Psoas muscle (tissue), 8 donors: ENCODE measurements at regions of chr1 and their contacts with region 1.

Region 1: GRCh38 chr1:62131093-62131725 is 63.4 kb upstream of the L1TD1 start:
- DNase-seq: no peak
- ATAC-seq: peak; percentile 74 to 88 (median 85)
- H3K4me3 ChIP-seq: no peak overlapping the region
- H3K27ac ChIP-seq: no peak overlapping the region
- H3K4me1 ChIP-seq: no peaks in the 10 kb centered on the region
- H3K27me3 ChIP-seq: no peaks in the 10 kb centered on the region
- CTCF ChIP-seq: peak; percentile 71

Region 2: DNA sequence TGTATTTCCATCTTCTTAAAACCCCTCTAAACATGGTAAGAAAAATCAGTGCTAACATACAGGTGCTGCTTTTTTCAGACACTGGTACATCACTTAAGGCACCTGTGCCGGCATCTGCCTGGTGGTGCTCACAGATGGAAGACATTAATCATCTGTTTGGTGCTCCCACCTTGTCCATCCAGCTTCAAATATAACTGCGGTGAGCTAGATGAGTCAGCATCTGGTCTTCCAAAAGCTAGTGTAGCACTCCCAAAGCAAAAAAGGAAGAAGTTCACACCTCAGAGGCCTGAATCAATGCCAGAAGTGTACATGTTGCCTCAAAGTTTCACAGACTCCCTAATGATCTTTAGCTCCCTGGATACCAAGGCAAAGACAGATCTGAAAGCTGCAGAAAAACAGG is 450.7 kb before region 1 on chr1:
- intact Hi-C with region 1: no loop called
- DNase-seq: no peak
- ATAC-seq: no peak
- H3K4me3 ChIP-seq: no peak overlapping the region
- H3K27ac ChIP-seq: no peak overlapping the region
- H3K4me1 ChIP-seq: no peaks in the 10 kb centered on the region
- H3K27me3 ChIP-seq: no peaks in the 10 kb centered on the region
- CTCF ChIP-seq: no peak

Region 3: GRCh38 chr1:61887076-61887867 is 243.9 kb before region 1 on chr1:
- intact Hi-C with region 1: no loop called
- DNase-seq: no peak
- ATAC-seq: no peak
- H3K4me3 ChIP-seq: no peak overlapping the region
- H3K27ac ChIP-seq: no peak overlapping the region
- H3K4me1 ChIP-seq: peaks cover 10% of the 10 kb centered on the region
- H3K27me3 ChIP-seq: no peaks in the 10 kb centered on the region
- CTCF ChIP-seq: no peak

Region 4: DNA sequence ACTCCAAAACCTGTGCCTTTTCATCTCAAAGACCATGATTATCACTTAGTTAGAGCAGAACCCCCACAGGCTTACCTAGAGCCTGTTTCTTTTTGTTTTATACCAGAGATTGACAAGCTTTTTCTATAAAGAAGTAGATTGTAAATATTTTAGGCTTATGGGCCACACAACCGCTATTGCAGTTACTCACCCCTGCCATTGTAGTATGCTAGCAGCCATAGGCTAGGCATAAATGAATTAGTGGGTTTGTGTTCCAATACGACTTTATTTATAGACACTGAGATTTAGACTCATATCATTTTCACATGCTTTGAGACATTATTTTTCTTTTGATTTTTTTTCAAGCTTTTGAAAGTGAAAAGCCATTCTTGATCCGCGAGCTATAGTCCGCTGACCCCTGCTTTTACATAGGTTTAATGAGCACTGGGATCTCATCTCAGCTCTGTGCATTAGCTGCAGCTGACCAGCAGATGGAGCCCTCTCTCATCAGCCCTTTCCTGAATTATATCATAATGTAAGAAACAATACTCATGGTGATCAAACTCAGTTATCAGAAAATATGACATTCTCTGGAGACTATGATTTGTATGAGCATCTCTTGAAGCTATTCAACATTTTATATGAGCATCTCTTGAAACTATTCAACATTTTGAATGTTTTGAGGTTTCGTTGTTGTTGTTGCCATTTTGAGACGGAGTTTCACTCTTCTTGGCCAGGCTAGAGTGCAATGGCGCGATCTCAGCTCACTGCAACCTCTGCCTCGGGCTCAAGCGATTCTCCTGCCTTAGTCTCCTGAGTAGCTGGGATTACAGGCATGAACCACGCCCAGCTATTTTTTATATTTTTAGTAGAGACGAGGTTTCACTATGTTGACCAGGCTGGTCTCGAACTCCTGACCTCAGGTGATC is 48.5 kb before region 1 on chr1:
- intact Hi-C with region 1: loop called (anchors 5 kb)
- DNase-seq: no peak
- ATAC-seq: peak; percentile 49 to 86 (median 72)
- H3K4me3 ChIP-seq: no peak overlapping the region
- H3K27ac ChIP-seq: no peak overlapping the region
- H3K4me1 ChIP-seq: no peaks in the 10 kb centered on the region
- H3K27me3 ChIP-seq: no peaks in the 10 kb centered on the region
- CTCF ChIP-seq: peak; percentile 92

Region 5: GRCh38 chr1:62088436-62088835 is 42.8 kb before region 1 on chr1:
- intact Hi-C with region 1: loop called (anchors 5 kb)
- DNase-seq: no peak
- ATAC-seq: no peak
- H3K4me3 ChIP-seq: no peak overlapping the region
- H3K27ac ChIP-seq: no peak overlapping the region
- H3K4me1 ChIP-seq: no peaks in the 10 kb centered on the region
- H3K27me3 ChIP-seq: no peaks in the 10 kb centered on the region
- CTCF ChIP-seq: no peak

Region 6: GRCh38 chr1:62735491-62736171 is 604.4 kb after region 1 on chr1:
- intact Hi-C with region 1: no loop called
- DNase-seq: no peak
- ATAC-seq: no peak
- H3K4me3 ChIP-seq: no peak overlapping the region
- H3K27ac ChIP-seq: no peak overlapping the region
- H3K4me1 ChIP-seq: no peaks in the 10 kb centered on the region
- H3K27me3 ChIP-seq: peaks cover 0 to 2% (median 0%) of the 10 kb centered on the region in 3 donors
- CTCF ChIP-seq: no peak